AG04449 (cell line): ENCODE measurements at regions of chr12 and their contacts with region 1.

Region 1: DNA sequence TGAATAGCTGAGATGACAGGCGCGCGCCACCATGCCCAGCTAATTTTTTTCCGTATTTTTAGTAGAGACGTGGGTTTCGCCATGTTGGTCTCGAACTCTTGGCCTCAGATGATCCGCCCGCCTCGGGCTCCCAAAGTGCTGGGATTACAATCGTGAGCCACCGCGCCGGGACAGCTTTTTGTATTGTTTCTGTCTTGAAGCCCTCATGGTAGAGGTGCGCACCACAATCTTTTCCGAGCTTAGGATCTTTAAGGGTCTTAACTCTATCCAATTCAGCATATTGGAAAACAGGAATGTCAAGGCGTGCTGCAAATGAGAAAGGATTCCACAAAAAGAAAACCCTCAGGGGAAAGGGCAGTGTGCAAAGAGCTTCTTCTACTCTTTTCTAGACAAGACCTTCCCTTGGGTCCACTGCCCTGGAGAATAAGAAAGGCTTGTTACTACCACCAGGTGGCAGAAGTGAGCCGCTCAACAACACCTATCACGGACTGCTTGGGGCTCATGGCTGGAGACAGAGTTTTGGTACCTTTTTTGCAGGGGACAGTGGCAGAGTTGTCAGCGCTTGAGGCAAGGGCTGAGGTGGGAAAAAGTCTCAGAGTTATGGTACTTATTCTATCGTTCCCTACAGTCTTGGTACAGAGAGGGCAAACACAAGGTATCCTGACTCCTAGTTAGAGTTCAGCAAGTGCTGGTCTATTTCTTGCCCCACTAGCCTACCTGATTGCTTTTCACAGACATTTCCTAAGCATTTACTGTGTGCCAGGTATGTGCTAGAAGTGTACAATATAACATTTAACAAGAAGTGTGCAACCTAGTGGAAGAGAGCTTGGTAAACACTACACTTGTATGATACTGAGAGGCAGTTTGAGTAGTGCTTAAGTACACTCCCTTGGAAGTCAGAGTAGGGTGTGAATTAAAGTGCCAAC is 16.4 kb upstream of the SP7 start:
- DNase-seq: peak; percentile 29
- H3K4me3 ChIP-seq: no peak overlapping the region
- CTCF ChIP-seq: peak; percentile 84

Region 2: GRCh38 chr12:53308276-53308675 is 44.3 kb before region 1 on chr12:
- CTCF ChIA-PET with region 1: no interaction called
- POLR2A ChIA-PET with region 1: no interaction called
- DNase-seq: no peak
- H3K4me3 ChIP-seq: no peak overlapping the region
- CTCF ChIP-seq: no peak

Region 3: GRCh38 chr12:53379389-53380103 is 27.0 kb after region 1 on chr12:
- CTCF ChIA-PET with region 1: interaction called, 21 read pairs
- POLR2A ChIA-PET with region 1: no interaction called
- DNase-seq: peak; percentile 100
- H3K4me3 ChIP-seq: peak overlapping the region; percentile 63
- CTCF ChIP-seq: no peak

Region 4: GRCh38 chr12:53414756-53415417 is 62.3 kb after region 1 on chr12:
- CTCF ChIA-PET with region 1: interaction called, 593 read pairs
- POLR2A ChIA-PET with region 1: no interaction called
- DNase-seq: no peak
- H3K4me3 ChIP-seq: no peak overlapping the region
- CTCF ChIP-seq: no peak

Region 5: GRCh38 chr12:53441040-53441833 is 88.6 kb after region 1 on chr12 and contains the start of gene PRR13:
- CTCF ChIA-PET with region 1: interaction called, 14 read pairs
- POLR2A ChIA-PET with region 1: no interaction called
- DNase-seq: peak; percentile 97
- H3K4me3 ChIP-seq: peak within 1 kb of the TSS; percentile 82
- CTCF ChIP-seq: no peak

Region 6: DNA sequence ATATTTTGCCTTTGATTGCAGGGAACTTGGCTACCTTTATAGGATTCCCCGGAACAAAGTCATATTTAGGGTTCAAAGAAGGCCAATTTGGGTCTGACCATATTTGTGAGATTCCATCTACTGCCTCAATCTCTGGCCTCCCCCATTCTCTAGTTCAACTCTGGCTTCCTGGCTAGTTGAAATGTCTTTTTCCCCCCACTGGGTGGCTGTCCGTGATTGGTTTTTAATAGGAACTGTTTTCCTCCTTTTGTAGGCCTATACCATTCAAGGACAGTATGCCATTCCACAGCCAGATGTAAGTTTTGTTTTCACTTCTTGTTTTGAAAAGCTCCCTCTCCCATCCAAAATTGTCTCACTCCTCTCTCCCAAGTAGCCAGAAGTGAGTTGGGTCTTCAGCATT is 113.1 kb after region 1 on chr12:
- CTCF ChIA-PET with region 1: interaction called, 19 read pairs
- POLR2A ChIA-PET with region 1: no interaction called
- DNase-seq: no peak
- H3K4me3 ChIP-seq: no peak overlapping the region
- CTCF ChIP-seq: no peak

Region 7: DNA sequence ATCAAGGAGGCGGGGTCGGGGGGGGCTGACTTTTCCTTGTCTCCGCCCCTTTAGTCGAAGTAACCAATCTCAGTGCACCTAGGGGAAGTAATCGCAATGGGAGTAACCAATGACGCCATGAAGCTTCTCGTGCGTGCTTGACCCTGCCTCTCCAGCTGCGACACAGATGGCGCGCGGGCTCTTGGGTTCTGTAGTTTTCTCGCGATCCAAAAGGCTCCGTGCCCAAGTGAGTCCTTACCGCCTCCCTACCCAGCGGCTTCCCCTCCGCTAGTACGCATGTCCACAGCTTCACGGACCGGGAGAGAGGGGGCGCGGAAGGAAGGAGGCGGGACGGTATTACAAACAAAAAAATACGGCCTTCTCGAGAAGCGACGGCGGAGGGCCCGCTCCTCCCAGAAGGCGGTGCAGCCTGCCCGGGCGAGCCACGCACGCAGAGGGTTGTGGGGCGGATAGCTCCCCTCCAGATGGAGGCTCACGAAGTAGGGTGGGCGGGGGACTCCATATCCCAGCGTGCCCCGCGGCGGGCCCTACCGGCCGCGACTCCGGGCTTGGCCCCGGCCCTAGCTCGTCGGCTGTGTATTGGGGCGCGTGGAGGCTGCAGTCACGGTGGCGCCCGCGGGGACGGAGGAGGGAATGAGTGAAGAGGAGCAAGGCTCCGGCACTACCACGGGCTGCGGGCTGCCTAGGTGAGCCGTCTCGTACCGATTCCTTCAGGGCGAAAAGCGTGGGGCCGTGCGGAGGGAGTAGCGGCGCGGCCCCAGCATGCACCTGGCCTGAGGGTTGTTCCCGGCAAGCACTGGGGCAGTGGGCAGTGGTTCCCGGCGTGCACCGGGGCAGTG is 148.4 kb after region 1 on chr12 and contains the start of gene TARBP2:
- CTCF ChIA-PET with region 1: interaction called, 113 read pairs
- POLR2A ChIA-PET with region 1: interaction called, 3 read pairs
- DNase-seq: peak; percentile 98
- H3K4me3 ChIP-seq: peak within 1 kb of the TSS; percentile 83
- CTCF ChIP-seq: no peak

Region 8: DNA sequence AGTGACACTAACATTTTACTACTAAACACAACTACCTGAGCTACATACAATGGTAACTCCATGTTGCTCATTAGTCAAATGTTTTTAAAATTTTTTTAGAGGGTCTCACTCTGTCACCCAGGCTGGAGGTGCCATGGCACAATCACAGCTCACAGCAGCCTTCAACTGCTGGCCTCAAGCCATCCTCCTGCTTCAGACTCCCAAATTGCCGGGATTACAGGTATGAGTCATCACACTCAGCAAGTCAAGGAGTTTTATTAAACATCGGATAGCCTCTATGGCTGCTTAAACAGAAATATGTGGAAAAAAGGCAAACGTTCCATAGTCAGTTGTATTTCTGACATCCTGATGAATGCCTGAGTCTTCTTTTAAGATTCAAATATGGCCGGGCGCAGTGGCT is 165.8 kb after region 1 on chr12:
- CTCF ChIA-PET with region 1: interaction called, 11 read pairs
- POLR2A ChIA-PET with region 1: no interaction called
- DNase-seq: no peak
- H3K4me3 ChIP-seq: no peak overlapping the region
- CTCF ChIP-seq: no peak